ENCODE measurements at regions of chr7 and their contacts with region 1.

Region 1: DNA sequence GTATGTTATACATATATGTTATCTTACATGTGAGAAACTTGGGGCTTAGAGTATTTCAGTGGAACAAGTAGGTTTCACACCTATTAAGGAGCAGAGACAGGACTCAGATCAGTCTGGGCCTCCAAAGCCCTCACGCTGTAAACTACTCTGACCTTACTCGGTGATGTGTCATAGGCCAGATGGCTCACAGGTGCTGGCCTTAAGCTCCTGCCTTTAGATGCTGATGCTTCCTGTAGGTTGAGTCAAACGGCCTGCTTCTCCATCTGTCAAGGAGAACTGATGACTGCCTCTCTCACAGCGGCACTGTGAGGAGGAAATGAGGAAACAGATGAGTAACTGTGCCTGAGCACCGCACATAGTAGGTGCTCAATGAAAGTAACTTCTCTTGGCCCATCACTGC is 312.6 kb upstream of the COBL start:
- DNase-seq: no peak

Region 2: GRCh38 chr7:51366930-51367613 is 262.1 kb before region 1 on chr7:
- intact Hi-C with region 1: no loop called
- DNase-seq: no peak

Region 3: DNA sequence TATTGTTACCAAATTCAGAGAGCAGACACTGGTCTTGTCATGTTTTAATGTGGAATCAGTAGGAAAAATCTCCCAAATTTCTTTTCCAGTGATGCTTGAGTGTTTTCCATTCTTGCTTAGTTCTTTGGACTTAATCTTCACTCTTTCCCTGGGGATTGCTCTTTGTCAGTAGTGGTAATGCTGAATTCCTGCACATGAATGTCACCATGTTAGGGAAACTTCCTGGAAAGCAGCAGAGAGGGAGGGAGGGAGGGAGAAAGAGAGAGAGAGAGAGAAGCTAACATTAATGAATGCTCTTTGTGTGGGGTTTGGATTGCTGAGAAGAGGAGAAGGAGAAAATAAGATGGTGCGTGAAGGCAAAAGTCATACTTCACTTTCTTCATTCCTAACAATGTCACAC is 17.3 kb before region 1 on chr7:
- intact Hi-C with region 1: loop called in 1 of 2 experiments (anchors 1 kb)
- DNase-seq: no peak